Activated CD4-positive, alpha-beta memory T cell treated with anti-CD3 and anti-CD28 coated beads for 36 hours (primary cell): ENCODE measurements at regions of chr21 and their contacts with region 1.

Region 1: DNA sequence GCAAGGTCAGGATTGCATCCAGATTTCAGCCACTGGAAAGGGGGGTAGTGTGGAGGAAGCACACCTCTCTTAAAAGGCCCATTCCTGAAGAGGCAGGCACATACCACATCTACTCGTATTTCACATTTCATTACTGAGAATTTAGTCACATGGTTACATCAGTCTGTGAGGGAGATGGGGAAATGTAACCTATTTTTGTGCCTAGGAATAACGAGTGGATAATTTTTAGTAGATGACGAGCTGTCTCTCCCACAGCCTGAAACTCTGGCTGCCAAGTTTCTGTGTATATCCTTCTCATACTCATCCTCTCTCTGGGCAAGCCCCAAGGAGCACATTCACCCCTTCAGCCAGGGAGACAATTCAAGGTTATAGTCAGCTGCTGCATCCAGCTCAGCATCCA is 10.3 kb upstream of the C21orf91 start:
- DNase-seq: no peak
- H3K4me3 Mint-ChIP-seq: no peak overlapping the region
- H3K27ac Mint-ChIP-seq: no peak overlapping the region
- H3K4me1 Mint-ChIP-seq: no peaks in the 10 kb centered on the region
- H3K27me3 Mint-ChIP-seq: no peaks in the 10 kb centered on the region

Region 2: DNA sequence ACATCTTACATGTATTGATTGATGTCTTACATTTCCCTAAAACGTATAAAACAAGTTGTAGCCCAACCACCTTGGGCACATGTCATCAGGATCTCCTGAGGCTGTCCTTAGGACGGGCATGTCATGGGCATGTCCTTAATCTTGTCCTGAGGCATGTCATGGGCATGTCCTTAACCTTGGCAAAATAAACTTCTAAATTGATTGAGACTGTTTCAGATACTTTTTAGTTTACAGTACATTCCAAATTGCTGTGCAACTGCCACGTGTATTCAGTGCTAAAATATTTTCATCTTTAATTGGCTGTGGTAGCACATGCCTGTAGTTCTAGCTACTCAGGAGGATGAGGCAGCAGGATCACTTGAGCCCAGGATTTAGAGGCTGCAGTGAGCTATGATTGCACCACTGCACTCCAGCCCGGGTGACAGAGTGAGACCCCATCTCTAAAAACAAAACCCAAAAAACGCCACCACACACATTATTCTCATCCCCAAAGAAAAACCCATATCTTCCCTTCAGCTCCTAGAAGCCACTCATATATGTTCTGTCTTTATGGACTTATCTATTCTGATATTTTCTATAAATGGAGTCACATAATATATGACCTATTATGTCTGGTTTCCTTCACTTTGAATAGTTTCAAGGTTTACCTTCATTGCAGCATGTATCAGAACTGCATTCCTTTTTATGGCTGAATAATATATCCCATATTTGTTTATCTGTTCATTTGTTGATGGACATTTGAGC is 120.8 kb before region 1 on chr21:
- CTCF ChIA-PET with region 1: no interaction called
- POLR2A ChIA-PET with region 1: no interaction called
- intact Hi-C with region 1: loop called (anchors 5 kb)
- DNase-seq: no peak
- H3K4me3 Mint-ChIP-seq: no peak overlapping the region
- H3K27ac Mint-ChIP-seq: no peak overlapping the region
- H3K4me1 Mint-ChIP-seq: peaks cover 13% of the 10 kb centered on the region
- H3K27me3 Mint-ChIP-seq: no peaks in the 10 kb centered on the region

Region 3: GRCh38 chr21:17813353-17813752 is 16.1 kb before region 1 on chr21:
- CTCF ChIA-PET with region 1: no interaction called
- POLR2A ChIA-PET with region 1: interaction called, 3 read pairs
- intact Hi-C with region 1: loop called (anchors 1 kb)
- DNase-seq: no peak
- H3K4me3 Mint-ChIP-seq: no peak overlapping the region
- H3K27ac Mint-ChIP-seq: peak overlapping the region; percentile 26
- H3K4me1 Mint-ChIP-seq: peaks cover 62% of the 10 kb centered on the region
- H3K27me3 Mint-ChIP-seq: no peaks in the 10 kb centered on the region